CD8-positive, alpha-beta T cell (primary cell): ENCODE measurements at regions of chr9 and their contacts with region 1.

Region 1: GRCh38 chr9:33290247-33291030 is at the start of gene NFX1:
- DNase-seq: peak; percentile 97 to 100 (median 99)
- ATAC-seq: peak; percentile 76
- H3K4me3 ChIP-seq: peak within 1 kb of the TSS; percentile 57 to 73
- H3K4me3 Mint-ChIP-seq: peak within 1 kb of the TSS; percentile 88
- H3K27ac ChIP-seq: peak within 1 kb of the TSS; percentile 96 to 98
- H3K27ac Mint-ChIP-seq: peak within 1 kb of the TSS; percentile 100
- H3K4me1 ChIP-seq: peaks cover 62% of the 10 kb centered on the region
- H3K4me1 Mint-ChIP-seq: peaks cover 66% of the 10 kb centered on the region
- H3K27me3 ChIP-seq: no peaks in the 10 kb centered on the region
- H3K27me3 Mint-ChIP-seq: no peaks in the 10 kb centered on the region
- CTCF ChIP-seq: no peak
- total RNA-seq, gene NFX1: 32.9 to 37.9 TPM

Region 2: DNA sequence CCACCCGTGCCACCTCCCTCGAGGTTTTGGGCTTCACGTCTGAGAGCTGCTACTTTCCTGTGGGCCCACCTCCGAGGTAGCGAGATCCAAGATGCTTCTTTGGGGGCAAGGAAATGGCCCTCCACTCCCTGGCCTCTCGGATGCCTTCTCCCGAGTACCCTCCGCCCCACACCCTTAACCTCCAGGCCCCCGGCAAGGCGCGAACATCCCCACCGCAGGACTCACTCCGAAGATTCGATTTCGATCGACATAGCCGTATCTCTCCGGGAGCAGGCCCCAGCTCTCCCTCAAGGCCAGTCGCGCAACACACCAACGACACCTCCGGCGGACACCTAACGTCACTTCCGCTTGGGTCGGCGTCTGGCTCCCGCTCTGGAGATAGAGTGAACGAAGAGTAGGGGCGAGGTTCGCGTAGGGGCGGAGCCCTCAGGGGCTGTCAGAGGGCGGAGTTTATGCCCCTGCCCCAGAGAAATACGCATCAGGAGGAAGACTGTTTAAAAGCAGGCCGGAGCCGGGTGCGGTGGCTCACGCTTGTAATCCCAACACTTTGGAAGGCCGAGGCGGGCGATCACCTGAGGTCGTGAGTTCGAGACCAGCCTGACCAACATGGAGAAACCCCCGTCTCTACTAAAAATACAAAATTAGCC is 214.0 kb before region 1 on chr9 and contains the start of gene SMU1:
- CTCF ChIA-PET with region 1: no interaction called
- POLR2A ChIA-PET with region 1: interaction called, 4 read pairs
- intact Hi-C with region 1: loop called in 1 of 2 experiments (anchors 1 kb)
- DNase-seq: peak; percentile 89 to 98 (median 94)
- ATAC-seq: peak; percentile 94
- H3K4me3 ChIP-seq: peak within 1 kb of the TSS; percentile 69 to 70
- H3K4me3 Mint-ChIP-seq: peak within 1 kb of the TSS; percentile 97
- H3K27ac ChIP-seq: peak within 1 kb of the TSS; percentile 91
- H3K27ac Mint-ChIP-seq: peak within 1 kb of the TSS; percentile 99
- H3K4me1 ChIP-seq: peaks cover 28% of the 10 kb centered on the region
- H3K4me1 Mint-ChIP-seq: peaks cover 34% of the 10 kb centered on the region
- H3K27me3 ChIP-seq: no peaks in the 10 kb centered on the region
- H3K27me3 Mint-ChIP-seq: no peaks in the 10 kb centered on the region
- CTCF ChIP-seq: no peak
- total RNA-seq, gene SMU1: 29.2 to 30.0 TPM

Region 3: DNA sequence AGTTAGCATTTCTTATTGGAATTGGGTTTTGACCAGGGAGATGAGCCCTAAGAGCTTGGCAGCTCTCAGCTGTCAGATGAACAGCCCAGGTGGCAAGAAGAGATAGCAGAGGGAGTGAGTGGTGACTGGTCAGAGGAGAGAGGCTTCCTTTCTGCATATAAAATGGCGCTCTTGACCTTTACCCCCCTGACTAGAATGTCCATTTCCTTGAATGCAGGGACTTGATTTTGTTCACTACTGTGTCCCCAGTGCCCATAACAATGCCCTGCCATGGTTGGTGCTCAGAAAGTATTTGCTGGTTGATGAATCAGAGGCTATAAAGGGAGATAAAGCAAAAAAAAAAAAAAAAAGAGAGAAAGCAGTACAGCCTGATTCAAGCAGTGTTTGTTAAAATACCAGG is 18.4 kb before region 1 on chr9:
- CTCF ChIA-PET with region 1: interaction called, 11 read pairs
- POLR2A ChIA-PET with region 1: interaction called, 7 read pairs
- intact Hi-C with region 1: loop called in 1 of 2 experiments (anchors 2 kb)
- DNase-seq: no peak
- ATAC-seq: no peak
- H3K4me3 ChIP-seq: no peak overlapping the region
- H3K4me3 Mint-ChIP-seq: no peak overlapping the region
- H3K27ac ChIP-seq: no peak overlapping the region
- H3K27ac Mint-ChIP-seq: peak overlapping the region; percentile 5
- H3K4me1 ChIP-seq: no peaks in the 10 kb centered on the region
- H3K4me1 Mint-ChIP-seq: peaks cover 22% of the 10 kb centered on the region
- H3K27me3 ChIP-seq: no peaks in the 10 kb centered on the region
- H3K27me3 Mint-ChIP-seq: no peaks in the 10 kb centered on the region
- CTCF ChIP-seq: no peak

Region 4: DNA sequence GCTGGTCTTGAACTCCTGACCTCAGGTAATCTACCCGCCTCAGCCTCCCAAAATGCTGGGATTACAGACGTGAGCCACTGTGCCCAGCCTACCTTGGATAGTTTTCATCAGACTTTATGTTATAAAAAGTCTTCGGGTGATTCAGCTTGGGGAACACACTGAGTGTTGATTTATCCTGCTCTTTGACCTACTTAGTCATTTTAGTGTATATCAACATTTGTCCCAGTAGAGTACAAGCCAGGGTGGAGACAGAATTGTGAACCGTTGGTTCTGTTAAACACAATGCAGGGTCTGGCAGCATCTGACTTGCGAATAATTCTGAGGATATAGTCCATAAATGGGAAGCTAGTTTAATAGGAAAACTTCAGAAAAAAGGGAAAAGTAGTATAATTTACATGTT is 39.6 kb after region 1 on chr9:
- CTCF ChIA-PET with region 1: no interaction called
- POLR2A ChIA-PET with region 1: no interaction called
- intact Hi-C with region 1: loop called in 1 of 2 experiments (anchors 5 kb)
- DNase-seq: no peak
- ATAC-seq: no peak
- H3K4me3 ChIP-seq: no peak overlapping the region
- H3K4me3 Mint-ChIP-seq: no peak overlapping the region
- H3K27ac ChIP-seq: no peak overlapping the region
- H3K27ac Mint-ChIP-seq: no peak overlapping the region
- H3K4me1 ChIP-seq: no peaks in the 10 kb centered on the region
- H3K4me1 Mint-ChIP-seq: peaks cover 2% of the 10 kb centered on the region
- H3K27me3 ChIP-seq: no peaks in the 10 kb centered on the region
- H3K27me3 Mint-ChIP-seq: no peaks in the 10 kb centered on the region
- CTCF ChIP-seq: no peak

Region 5: DNA sequence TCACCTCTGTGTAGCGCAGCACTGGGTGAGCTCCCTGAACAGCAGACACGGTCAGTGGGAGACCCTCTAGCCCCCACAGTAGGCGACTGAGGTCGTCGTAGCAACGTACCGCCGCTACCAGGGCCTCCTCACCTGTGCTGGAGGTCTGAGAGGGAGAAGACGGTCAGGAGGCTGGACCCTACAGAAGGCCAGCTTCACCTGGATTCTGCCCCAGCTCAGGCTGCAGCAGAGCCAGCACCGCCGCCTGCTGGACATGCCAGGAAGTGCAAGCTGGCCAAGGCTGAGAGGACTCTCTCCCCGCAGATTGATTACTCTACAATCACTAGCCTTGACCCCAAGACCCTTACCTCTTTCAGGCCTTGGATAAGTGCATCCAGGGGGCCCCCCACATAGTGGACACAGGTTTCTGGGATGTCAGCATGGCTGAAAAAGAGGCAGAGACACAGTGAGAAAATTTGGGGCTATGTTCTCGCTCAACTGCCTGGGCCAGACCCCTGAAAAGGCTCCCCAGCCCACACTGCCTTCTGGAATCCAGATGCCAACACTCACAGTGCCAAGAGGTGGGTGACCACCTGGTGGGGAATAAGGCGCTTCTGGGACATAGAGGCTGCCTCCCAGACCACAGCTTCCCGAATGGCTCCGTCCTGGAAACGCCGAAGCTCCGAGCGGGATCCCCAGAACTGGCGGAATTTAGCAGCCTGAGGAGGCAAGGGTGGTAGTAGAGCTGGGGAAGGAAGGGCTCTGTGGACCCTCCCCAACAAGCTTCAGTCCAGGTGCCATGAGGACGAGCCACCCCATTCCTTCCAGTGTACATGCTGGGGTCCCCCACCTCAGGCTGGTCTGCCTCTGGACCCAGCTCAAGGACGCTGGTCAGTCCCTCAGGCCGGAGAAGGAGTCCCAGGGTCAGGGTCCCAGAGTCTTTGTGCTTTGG is 176.4 kb after region 1 on chr9:
- CTCF ChIA-PET with region 1: interaction called, 5 read pairs
- POLR2A ChIA-PET with region 1: no interaction called
- intact Hi-C with region 1: loop called in 1 of 2 experiments (anchors 5 kb)
- DNase-seq: peak; percentile 42 to 85 (median 72)
- ATAC-seq: peak; percentile 93
- H3K4me3 ChIP-seq: no peak overlapping the region
- H3K4me3 Mint-ChIP-seq: no peak overlapping the region
- H3K27ac ChIP-seq: no peak overlapping the region
- H3K27ac Mint-ChIP-seq: peak overlapping the region; percentile 22
- H3K4me1 ChIP-seq: peaks cover 5% of the 10 kb centered on the region
- H3K4me1 Mint-ChIP-seq: peaks cover 10% of the 10 kb centered on the region
- H3K27me3 ChIP-seq: no peaks in the 10 kb centered on the region
- H3K27me3 Mint-ChIP-seq: no peaks in the 10 kb centered on the region
- CTCF ChIP-seq: peak; percentile 85

Region 6: GRCh38 chr9:33614001-33614687 is 323.7 kb after region 1 on chr9:
- CTCF ChIA-PET with region 1: no interaction called
- POLR2A ChIA-PET with region 1: no interaction called
- intact Hi-C with region 1: no loop called
- DNase-seq: no peak
- ATAC-seq: no peak
- H3K4me3 ChIP-seq: no peak overlapping the region
- H3K4me3 Mint-ChIP-seq: no peak overlapping the region
- H3K27ac ChIP-seq: no peak overlapping the region
- H3K27ac Mint-ChIP-seq: no peak overlapping the region
- H3K4me1 ChIP-seq: no peaks in the 10 kb centered on the region
- H3K4me1 Mint-ChIP-seq: no peaks in the 10 kb centered on the region
- H3K27me3 ChIP-seq: peaks cover 0 to 4% of the 10 kb centered on the region in 2 experiments
- H3K27me3 Mint-ChIP-seq: peaks cover 11% of the 10 kb centered on the region
- CTCF ChIP-seq: no peak

Region 7: GRCh38 chr9:34048923-34049697 is 758.7 kb after region 1 on chr9:
- CTCF ChIA-PET with region 1: no interaction called
- POLR2A ChIA-PET with region 1: interaction called, 4 read pairs
- intact Hi-C with region 1: loop called in 1 of 2 experiments (anchors 10 kb)
- DNase-seq: peak; percentile 92 to 99 (median 97)
- ATAC-seq: peak; percentile 81
- H3K4me3 ChIP-seq: peak overlapping the region; percentile 76 to 79
- H3K4me3 Mint-ChIP-seq: peak overlapping the region; percentile 97
- H3K27ac ChIP-seq: peak overlapping the region; percentile 87 to 95
- H3K27ac Mint-ChIP-seq: peak overlapping the region; percentile 100
- H3K4me1 ChIP-seq: peaks cover 23% of the 10 kb centered on the region
- H3K4me1 Mint-ChIP-seq: peaks cover 29% of the 10 kb centered on the region
- H3K27me3 ChIP-seq: no peaks in the 10 kb centered on the region
- H3K27me3 Mint-ChIP-seq: no peaks in the 10 kb centered on the region
- CTCF ChIP-seq: no peak